H1 (cell line): ENCODE measurements at regions of chr3 and their contacts with region 1.

Region 1: GRCh38 chr3:113136071-113136470 is 75.3 kb upstream of the BOC start:
- DNase-seq: no peak
- H3K4me3 ChIP-seq: no peak overlapping the region; a peak in 1 of 8 replicates
- H3K27ac ChIP-seq: no peak overlapping the region
- H3K4me1 ChIP-seq: peaks cover 0 to 4% (median 1%) of the 10 kb centered on the region in 4 experiments; a peak in 3 of 7 replicates
- H3K27me3 ChIP-seq: no peaks in the 10 kb centered on the region
- CTCF ChIP-seq: peak in 2 of 3 experiments; percentile 36 to 49; a peak in 2 of 4 replicates
- EP300 ChIP-seq: no peak
- POLR2A ChIP-seq: no peak
- RAD21 ChIP-seq: peak; percentile 44 to 64

Region 2: GRCh38 chr3:113084777-113085176 is 51.3 kb before region 1 on chr3:
- CTCF ChIA-PET with region 1: interaction called, 13 read pairs
- POLR2A ChIA-PET with region 1: no interaction called
- DNase-seq: no peak
- H3K4me3 ChIP-seq: no peak overlapping the region
- H3K27ac ChIP-seq: no peak overlapping the region
- H3K4me1 ChIP-seq: peaks cover 0 to 6% (median 4%) of the 10 kb centered on the region in 4 experiments; a peak in 3 of 7 replicates
- H3K27me3 ChIP-seq: no peaks in the 10 kb centered on the region
- CTCF ChIP-seq: no peak
- EP300 ChIP-seq: no peak
- POLR2A ChIP-seq: no peak
- RAD21 ChIP-seq: no peak

Region 3: GRCh38 chr3:113151461-113152031 is 15.5 kb after region 1 on chr3:
- CTCF ChIA-PET with region 1: interaction called, 46 read pairs
- POLR2A ChIA-PET with region 1: no interaction called
- DNase-seq: no peak
- H3K4me3 ChIP-seq: no peak overlapping the region
- H3K27ac ChIP-seq: no peak overlapping the region
- H3K4me1 ChIP-seq: peaks cover 0 to 6% (median 4%) of the 10 kb centered on the region in 4 experiments; a peak in 3 of 7 replicates
- H3K27me3 ChIP-seq: no peaks in the 10 kb centered on the region
- CTCF ChIP-seq: no peak
- EP300 ChIP-seq: no peak
- POLR2A ChIP-seq: no peak
- RAD21 ChIP-seq: no peak

Region 4: DNA sequence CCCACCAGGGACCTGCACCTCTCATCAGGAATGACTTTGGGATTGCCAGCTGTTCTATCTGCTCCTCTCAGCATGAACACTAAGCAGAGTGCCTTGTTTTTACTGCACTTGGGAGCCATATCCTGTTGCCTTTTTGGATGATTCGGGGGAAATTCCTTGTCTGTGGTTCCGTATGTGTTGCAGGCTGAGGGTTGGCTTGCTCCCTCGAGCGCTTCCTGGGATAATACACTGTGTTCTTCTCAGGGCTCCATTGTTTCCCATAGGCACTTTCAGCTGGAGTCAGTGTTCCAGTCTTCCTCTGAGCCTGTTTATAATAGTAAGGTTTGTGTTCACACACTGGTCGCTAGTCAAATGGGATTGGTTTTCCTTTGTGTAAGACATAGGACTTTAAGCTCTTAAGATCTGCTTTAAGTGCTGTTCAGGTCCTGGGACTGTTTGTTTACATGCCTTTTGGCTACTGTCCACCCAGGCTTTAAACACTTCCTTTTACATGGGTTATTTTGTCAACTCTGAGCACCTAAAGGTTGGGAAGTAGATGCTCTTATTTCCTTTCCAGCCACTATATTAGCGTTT is 98.7 kb after region 1 on chr3:
- CTCF ChIA-PET with region 1: interaction called, 10 read pairs
- POLR2A ChIA-PET with region 1: no interaction called
- DNase-seq: no peak
- H3K4me3 ChIP-seq: no peak overlapping the region
- H3K27ac ChIP-seq: no peak overlapping the region; the same call in 1 of the 2 replicates
- H3K4me1 ChIP-seq: peaks cover 0 to 7% (median 4%) of the 10 kb centered on the region in 4 experiments; a peak in 6 of 7 replicates
- H3K27me3 ChIP-seq: no peaks in the 10 kb centered on the region
- CTCF ChIP-seq: no peak
- EP300 ChIP-seq: no peak
- POLR2A ChIP-seq: no peak
- RAD21 ChIP-seq: no peak

Region 5: GRCh38 chr3:113255100-113255853 is 119.2 kb after region 1 on chr3:
- CTCF ChIA-PET with region 1: interaction called, 14 read pairs
- POLR2A ChIA-PET with region 1: no interaction called
- DNase-seq: no peak
- H3K4me3 ChIP-seq: no peak overlapping the region
- H3K27ac ChIP-seq: no peak overlapping the region
- H3K4me1 ChIP-seq: peaks cover 0 to 5% (median 4%) of the 10 kb centered on the region in 4 experiments; a peak in 4 of 7 replicates
- H3K27me3 ChIP-seq: no peaks in the 10 kb centered on the region
- CTCF ChIP-seq: peak; percentile 44 to 47 (median 45)
- EP300 ChIP-seq: no peak
- POLR2A ChIP-seq: no peak
- RAD21 ChIP-seq: peak; percentile 19 to 49; a peak in 3 of 4 replicates

Region 6: GRCh38 chr3:113275929-113276750 is 140.1 kb after region 1 on chr3:
- CTCF ChIA-PET with region 1: interaction called, 47 read pairs
- POLR2A ChIA-PET with region 1: no interaction called
- DNase-seq: no peak
- H3K4me3 ChIP-seq: no peak overlapping the region; a peak in 1 of 8 replicates
- H3K27ac ChIP-seq: no peak overlapping the region
- H3K4me1 ChIP-seq: peaks cover 0 to 11% (median 5%) of the 10 kb centered on the region in 4 experiments; a peak in 5 of 7 replicates
- H3K27me3 ChIP-seq: no peaks in the 10 kb centered on the region
- CTCF ChIP-seq: peak; percentile 8 to 54 (median 39)
- EP300 ChIP-seq: no peak
- POLR2A ChIP-seq: no peak
- RAD21 ChIP-seq: peak; percentile 23 to 48; a peak in 3 of 4 replicates